ENCODE measurements at regions of chr13 and their contacts with region 1.

Region 1: GRCh38 chr13:33931397-33932311 is 113.7 kb downstream of the RFC3 start:
- DNase-seq: peak; percentile 60
- H3K4me3 ChIP-seq: no peak overlapping the region
- H3K27ac ChIP-seq: no peak overlapping the region
- H3K4me1 ChIP-seq: no peaks in the 10 kb centered on the region
- H3K27me3 ChIP-seq: no peaks in the 10 kb centered on the region
- CTCF ChIP-seq: peak; percentile 60

Region 2: DNA sequence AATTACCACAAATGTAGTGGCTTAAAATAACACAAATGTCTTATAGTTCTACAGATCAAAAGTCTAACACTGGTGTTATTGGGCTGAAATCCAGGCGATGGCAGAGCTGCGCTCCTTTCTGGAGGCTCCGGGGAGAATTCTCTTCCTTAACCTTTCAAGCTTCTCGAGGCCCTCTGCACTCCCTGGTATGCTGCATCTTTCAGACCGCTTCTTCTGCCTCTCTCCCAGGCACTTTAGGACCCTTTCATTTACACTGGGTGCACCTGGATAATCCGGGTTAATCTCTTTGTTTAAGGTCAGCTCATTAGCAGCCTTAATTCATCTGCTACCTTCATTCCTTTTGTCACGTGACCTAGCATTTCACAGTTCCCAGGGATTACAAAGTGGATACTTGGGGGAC is 325.0 kb before region 1 on chr13:
- CTCF ChIA-PET with region 1: no interaction called
- POLR2A ChIA-PET with region 1: no interaction called
- intact Hi-C with region 1: no loop called
- DNase-seq: peak; percentile 8
- H3K4me3 ChIP-seq: no peak overlapping the region
- H3K27ac ChIP-seq: no peak overlapping the region
- H3K4me1 ChIP-seq: peaks cover 16% of the 10 kb centered on the region
- H3K27me3 ChIP-seq: no peaks in the 10 kb centered on the region
- CTCF ChIP-seq: peak; percentile 31; the same call in 1 of the 2 replicates

Region 3: GRCh38 chr13:35157143-35157755 is 1225.6 kb after region 1 on chr13:
- CTCF ChIA-PET with region 1: no interaction called
- POLR2A ChIA-PET with region 1: no interaction called
- intact Hi-C with region 1: loop called (anchors 2 kb)
- DNase-seq: peak; percentile 69
- H3K4me3 ChIP-seq: no peak overlapping the region
- H3K27ac ChIP-seq: no peak overlapping the region
- H3K4me1 ChIP-seq: no peaks in the 10 kb centered on the region
- H3K27me3 ChIP-seq: no peaks in the 10 kb centered on the region
- CTCF ChIP-seq: peak; percentile 71

Measured in A673 (cell line).